ENCODE measurements at regions of chr12 and their contacts with region 1.

Region 1: GRCh38 chr12:89695100-89695499 is 13.5 kb downstream of the ATP2B1 start:
- DNase-seq: no peak
- ATAC-seq: no peak
- H3K4me3 ChIP-seq: no peak overlapping the region
- H3K4me3 Mint-ChIP-seq: no peak overlapping the region
- H3K27ac ChIP-seq: no peak overlapping the region
- H3K27ac Mint-ChIP-seq: no peak overlapping the region
- H3K4me1 ChIP-seq: peaks cover 16% of the 10 kb centered on the region
- H3K4me1 Mint-ChIP-seq: peaks cover 93% of the 10 kb centered on the region
- H3K27me3 ChIP-seq: no peaks in the 10 kb centered on the region
- H3K27me3 Mint-ChIP-seq: no peaks in the 10 kb centered on the region
- CTCF ChIP-seq: no peak

Region 2: DNA sequence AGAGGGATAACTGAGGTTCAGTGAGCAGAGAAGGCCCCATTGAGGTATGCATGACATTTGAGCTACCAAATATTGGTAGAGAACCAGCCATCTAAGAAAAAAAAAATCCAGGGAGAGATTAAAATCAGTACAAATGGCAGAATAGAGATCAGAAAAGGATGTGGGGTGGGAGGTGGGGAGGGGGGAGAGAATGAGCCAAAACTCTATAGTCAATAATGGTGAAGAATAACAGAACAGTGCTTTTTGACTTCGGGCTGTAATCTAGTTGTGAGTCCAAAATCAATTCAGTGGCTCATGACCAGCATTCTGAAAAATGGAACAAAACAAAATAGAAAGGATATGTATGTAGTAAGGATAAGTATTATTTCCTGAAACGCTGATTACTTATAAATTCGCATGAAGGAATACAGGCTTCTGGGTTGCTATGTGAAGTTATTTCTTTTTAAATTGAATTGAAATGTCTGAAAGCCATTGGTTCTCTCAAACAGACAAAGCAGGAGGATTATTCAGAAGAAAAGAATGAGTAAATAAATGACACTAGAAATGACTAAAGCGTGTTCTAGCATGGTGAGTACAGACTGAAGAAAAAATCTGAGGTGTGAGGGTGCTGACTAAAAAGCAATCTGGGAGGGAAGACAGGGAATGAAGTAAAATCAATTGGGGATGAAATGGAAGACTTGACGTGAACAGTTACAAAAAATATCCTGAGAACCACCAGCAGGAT is 58.9 kb before region 1 on chr12:
- CTCF ChIA-PET with region 1: no interaction called
- POLR2A ChIA-PET with region 1: no interaction called
- intact Hi-C with region 1: loop called in 1 of 2 experiments (anchors 5 kb)
- DNase-seq: no peak
- ATAC-seq: no peak
- H3K4me3 ChIP-seq: no peak overlapping the region
- H3K4me3 Mint-ChIP-seq: no peak overlapping the region
- H3K27ac ChIP-seq: no peak overlapping the region
- H3K27ac Mint-ChIP-seq: peak overlapping the region; percentile 6
- H3K4me1 ChIP-seq: peaks cover 4% of the 10 kb centered on the region
- H3K4me1 Mint-ChIP-seq: peaks cover 23% of the 10 kb centered on the region
- H3K27me3 ChIP-seq: no peaks in the 10 kb centered on the region
- H3K27me3 Mint-ChIP-seq: no peaks in the 10 kb centered on the region
- CTCF ChIP-seq: no peak

Region 3: DNA sequence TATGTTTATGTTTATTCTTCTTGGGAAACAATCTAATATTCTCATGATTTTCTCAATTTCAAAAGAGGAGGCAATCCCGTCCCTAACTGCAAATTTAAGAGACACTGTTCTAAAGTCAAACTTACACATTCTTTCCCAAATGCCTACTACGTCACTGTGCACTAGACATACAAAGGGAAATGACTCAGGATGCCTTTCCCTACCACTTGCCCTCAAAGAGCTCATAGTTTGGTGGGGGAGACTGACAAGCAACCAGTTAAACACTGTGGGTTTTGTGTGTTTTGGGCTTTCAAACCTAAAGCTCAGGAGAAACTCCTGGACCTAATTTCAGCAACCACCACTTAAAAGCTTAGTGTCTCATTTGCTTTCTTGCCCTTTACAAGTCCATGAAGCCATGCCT is 44.9 kb before region 1 on chr12:
- CTCF ChIA-PET with region 1: no interaction called
- POLR2A ChIA-PET with region 1: no interaction called
- intact Hi-C with region 1: loop called in 1 of 2 experiments (anchors 5 kb)
- DNase-seq: no peak
- ATAC-seq: no peak
- H3K4me3 ChIP-seq: no peak overlapping the region
- H3K4me3 Mint-ChIP-seq: no peak overlapping the region
- H3K27ac ChIP-seq: no peak overlapping the region
- H3K27ac Mint-ChIP-seq: no peak overlapping the region
- H3K4me1 ChIP-seq: peaks cover 10% of the 10 kb centered on the region
- H3K4me1 Mint-ChIP-seq: peaks cover 56% of the 10 kb centered on the region
- H3K27me3 ChIP-seq: no peaks in the 10 kb centered on the region
- H3K27me3 Mint-ChIP-seq: no peaks in the 10 kb centered on the region
- CTCF ChIP-seq: no peak

Measured in CD4-positive, alpha-beta T cell (primary cell).